Left cardiac atrium (tissue), 4 donors: ENCODE measurements at regions of chr3 and their contacts with region 1.

Region 1: GRCh38 chr3:13884851-13885703 is 5.2 kb upstream of the WNT7A start:
- DNase-seq: no peak
- ATAC-seq: no peak

Region 2: GRCh38 chr3:13657660-13658435 is 227.2 kb before region 1 on chr3:
- intact Hi-C with region 1: loop called (anchors 5 to 10 kb)
- DNase-seq: peak; percentile 59
- ATAC-seq: peak; percentile 65 to 73

Region 3: DNA sequence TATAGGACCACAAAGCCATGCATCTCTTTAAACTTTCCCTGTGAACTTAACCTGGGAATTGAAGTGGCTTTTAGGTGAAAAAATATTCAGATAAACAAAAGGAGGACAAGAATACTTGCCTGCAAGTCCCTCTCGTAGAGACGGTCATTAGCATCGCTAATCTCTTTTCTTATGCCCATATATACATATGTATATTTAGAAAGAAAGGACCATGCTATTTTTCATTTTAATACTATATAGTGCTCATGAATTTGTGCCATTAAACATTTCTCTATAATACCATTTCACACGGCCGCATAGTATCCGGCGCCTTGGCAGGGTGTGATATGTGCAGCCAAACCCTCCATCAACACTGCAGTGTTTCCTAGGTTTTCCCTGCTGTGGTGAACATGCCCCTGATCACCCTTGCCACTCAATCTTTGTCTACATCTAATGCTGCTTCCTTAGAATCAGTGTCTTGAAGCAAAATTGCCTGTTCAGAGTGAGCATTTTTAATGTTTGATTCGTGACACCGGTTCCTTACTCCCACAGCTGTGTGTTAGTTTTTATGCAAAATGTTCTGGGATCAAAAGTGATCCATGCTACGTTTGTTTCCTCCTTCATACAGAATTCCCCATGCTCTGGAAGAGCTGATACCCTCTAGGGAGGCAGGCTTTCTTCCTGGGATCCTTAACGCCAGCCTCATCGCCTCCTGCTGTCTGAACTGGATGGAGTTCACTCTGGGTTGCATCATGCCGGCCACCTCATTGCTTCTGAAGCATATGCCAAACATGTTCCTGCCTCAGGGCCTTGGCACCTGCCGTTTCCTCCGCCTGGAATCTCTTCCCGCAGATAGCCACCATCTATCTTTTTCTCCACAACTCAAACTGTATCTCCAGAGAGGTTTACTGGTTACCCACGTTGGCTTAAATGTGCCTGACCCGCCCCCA is 218.0 kb before region 1 on chr3:
- intact Hi-C with region 1: loop called in 1 of 2 experiments (anchors 10 kb)
- DNase-seq: no peak
- ATAC-seq: no peak

Region 4: DNA sequence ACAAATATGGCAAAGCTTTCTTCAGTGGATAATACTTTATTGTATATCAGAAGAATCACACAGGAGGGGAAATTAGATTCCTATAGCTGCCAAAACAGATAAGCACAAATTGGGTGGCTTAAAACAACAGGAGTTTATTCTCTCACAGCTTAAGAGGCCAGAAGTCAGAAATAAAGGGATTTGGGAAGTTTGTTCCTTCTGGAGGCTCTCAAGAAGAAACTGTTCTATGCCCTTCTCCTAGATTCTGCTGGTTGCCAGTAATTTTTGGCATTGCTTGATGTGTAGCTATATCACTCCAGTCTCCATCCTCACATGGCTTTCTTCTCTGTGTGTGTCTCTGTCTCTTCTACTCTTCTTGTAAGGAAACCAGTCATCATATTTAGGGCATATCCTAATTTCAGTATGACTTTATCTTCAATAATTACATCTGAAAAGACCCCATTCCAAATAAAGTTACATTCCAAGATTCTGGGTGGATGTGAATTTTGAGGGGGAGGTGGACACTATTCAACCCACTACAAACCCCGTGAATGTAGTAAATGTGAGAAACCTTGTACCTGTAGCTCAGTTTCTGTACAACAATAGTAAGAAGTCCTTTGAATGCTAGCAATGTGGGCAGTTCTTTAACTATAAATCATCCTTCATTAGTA is 17.0 kb after region 1 on chr3:
- intact Hi-C with region 1: no loop called
- DNase-seq: no peak
- ATAC-seq: no peak